CD4-positive, alpha-beta T cell (primary cell): ENCODE measurements at regions of chr4 and their contacts with region 1.

Region 1: GRCh38 chr4:184474263-184475095 is at the start of gene IRF2:
- DNase-seq: peak; percentile 92 to 99 (median 96)
- ATAC-seq: peak; percentile 81
- H3K4me3 ChIP-seq: peak within 1 kb of the TSS; percentile 99
- H3K4me3 Mint-ChIP-seq: peak within 1 kb of the TSS; percentile 98
- H3K27ac ChIP-seq: peak within 1 kb of the TSS; percentile 87 to 95
- H3K27ac Mint-ChIP-seq: peak within 1 kb of the TSS; percentile 98
- H3K4me1 ChIP-seq: peaks cover 51% of the 10 kb centered on the region
- H3K4me1 Mint-ChIP-seq: peaks cover 65% of the 10 kb centered on the region
- H3K27me3 ChIP-seq: no peaks in the 10 kb centered on the region
- H3K27me3 Mint-ChIP-seq: no peaks in the 10 kb centered on the region
- CTCF ChIP-seq: no peak
- total RNA-seq, gene IRF2: 11.4 to 14.9 TPM

Region 2: GRCh38 chr4:184370711-184371389 is 103.6 kb before region 1 on chr4:
- CTCF ChIA-PET with region 1: no interaction called
- POLR2A ChIA-PET with region 1: no interaction called
- intact Hi-C with region 1: no loop called
- DNase-seq: no peak
- ATAC-seq: no peak
- H3K4me3 ChIP-seq: no peak overlapping the region
- H3K4me3 Mint-ChIP-seq: no peak overlapping the region
- H3K27ac ChIP-seq: no peak overlapping the region
- H3K27ac Mint-ChIP-seq: no peak overlapping the region
- H3K4me1 ChIP-seq: no peaks in the 10 kb centered on the region
- H3K4me1 Mint-ChIP-seq: no peaks in the 10 kb centered on the region
- H3K27me3 ChIP-seq: no peaks in the 10 kb centered on the region
- H3K27me3 Mint-ChIP-seq: no peaks in the 10 kb centered on the region
- CTCF ChIP-seq: no peak

Region 3: DNA sequence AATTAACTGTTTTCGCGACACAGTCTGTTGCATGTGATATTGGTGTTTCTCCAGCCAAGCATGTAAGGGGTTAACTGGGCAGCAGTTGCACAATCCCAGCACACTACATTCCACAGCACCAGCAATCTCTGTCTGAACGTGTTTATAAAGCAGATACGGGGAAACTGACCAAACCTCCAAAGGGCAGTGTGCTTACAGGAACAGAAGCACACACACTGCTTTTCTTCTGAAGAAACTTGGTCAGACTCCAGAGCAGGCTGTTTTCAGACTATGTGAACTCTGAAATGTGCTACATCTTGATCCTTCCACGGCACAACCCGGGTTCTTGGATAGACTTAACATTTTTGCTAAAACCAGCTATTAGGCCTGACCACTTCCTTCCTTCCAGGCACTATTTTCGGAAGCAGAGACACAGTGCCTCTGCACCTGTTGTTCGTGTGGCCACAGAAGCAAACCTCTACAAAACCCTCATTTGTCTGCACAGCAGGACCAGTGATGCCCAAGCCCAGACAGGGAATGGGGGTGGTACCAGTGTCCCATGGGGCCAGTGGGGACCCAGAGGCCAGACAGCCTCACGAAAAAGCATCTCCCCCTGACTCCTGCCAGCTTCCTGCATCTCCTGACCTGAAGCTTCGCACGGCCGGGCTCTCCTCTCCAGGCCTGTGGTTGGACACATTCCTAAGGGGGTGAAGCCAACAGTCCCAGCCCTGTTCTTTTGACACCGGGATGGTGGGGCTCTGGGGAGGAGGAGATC is 90.2 kb before region 1 on chr4:
- CTCF ChIA-PET with region 1: no interaction called
- POLR2A ChIA-PET with region 1: interaction called, 13 read pairs
- intact Hi-C with region 1: no loop called
- DNase-seq: peak in 3 of 14 experiments; percentile 8 to 39 (median 10)
- ATAC-seq: peak; percentile 11
- H3K4me3 ChIP-seq: no peak overlapping the region
- H3K4me3 Mint-ChIP-seq: peak overlapping the region; percentile 40
- H3K27ac ChIP-seq: peak overlapping the region in 1 of 2 donors; percentile 15
- H3K27ac Mint-ChIP-seq: peak overlapping the region; percentile 60
- H3K4me1 ChIP-seq: peaks cover 44% of the 10 kb centered on the region
- H3K4me1 Mint-ChIP-seq: peaks cover 68% of the 10 kb centered on the region
- H3K27me3 ChIP-seq: no peaks in the 10 kb centered on the region
- H3K27me3 Mint-ChIP-seq: no peaks in the 10 kb centered on the region
- CTCF ChIP-seq: no peak

Region 4: GRCh38 chr4:184437565-184438265 is 36.8 kb before region 1 on chr4:
- CTCF ChIA-PET with region 1: no interaction called
- POLR2A ChIA-PET with region 1: no interaction called
- intact Hi-C with region 1: loop called in 1 of 2 experiments (anchors 5 kb)
- DNase-seq: no peak
- ATAC-seq: peak; percentile 60
- H3K4me3 ChIP-seq: no peak overlapping the region
- H3K4me3 Mint-ChIP-seq: no peak overlapping the region
- H3K27ac ChIP-seq: no peak overlapping the region
- H3K27ac Mint-ChIP-seq: peak overlapping the region; percentile 23
- H3K4me1 ChIP-seq: peaks cover 57% of the 10 kb centered on the region
- H3K4me1 Mint-ChIP-seq: peaks cover 92% of the 10 kb centered on the region
- H3K27me3 ChIP-seq: no peaks in the 10 kb centered on the region
- H3K27me3 Mint-ChIP-seq: no peaks in the 10 kb centered on the region
- CTCF ChIP-seq: no peak

Region 5: DNA sequence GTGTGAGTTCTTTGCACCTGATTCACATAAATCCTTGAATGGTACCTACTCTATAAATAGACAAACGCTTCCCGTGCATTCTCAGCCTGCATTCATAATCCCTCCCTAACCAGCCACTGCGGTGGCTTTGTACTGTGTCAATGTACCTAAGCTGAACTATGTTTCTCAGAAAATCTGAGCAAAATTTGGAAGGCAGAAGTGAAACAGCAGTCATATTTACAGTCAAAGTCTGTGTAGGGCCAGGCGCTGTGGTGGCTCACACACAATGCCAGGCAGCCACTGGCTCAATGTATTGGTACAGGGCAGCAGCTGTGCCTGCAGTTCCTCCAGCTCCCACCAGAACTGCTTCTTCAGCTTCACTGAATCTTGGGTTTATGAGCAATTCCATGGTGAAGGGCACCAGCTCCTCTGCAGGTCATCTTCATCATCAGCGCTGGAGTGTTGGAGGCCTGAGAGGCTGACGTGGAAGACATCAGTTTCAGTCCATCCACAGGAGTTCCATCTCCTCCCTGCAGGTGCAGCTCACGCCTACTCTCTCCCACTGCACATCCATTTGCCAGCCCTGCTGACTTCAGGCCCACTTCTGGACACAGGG is 32.1 kb after region 1 on chr4:
- CTCF ChIA-PET with region 1: interaction called, 3 read pairs
- POLR2A ChIA-PET with region 1: interaction called, 15 read pairs
- intact Hi-C with region 1: no loop called
- DNase-seq: peak in 4 of 14 experiments; percentile 4 to 58 (median 28)
- ATAC-seq: peak; percentile 80
- H3K4me3 ChIP-seq: no peak overlapping the region
- H3K4me3 Mint-ChIP-seq: peak overlapping the region; percentile 1
- H3K27ac ChIP-seq: no peak overlapping the region
- H3K27ac Mint-ChIP-seq: no peak overlapping the region
- H3K4me1 ChIP-seq: peaks cover 21% of the 10 kb centered on the region
- H3K4me1 Mint-ChIP-seq: peaks cover 36% of the 10 kb centered on the region
- H3K27me3 ChIP-seq: no peaks in the 10 kb centered on the region
- H3K27me3 Mint-ChIP-seq: no peaks in the 10 kb centered on the region
- CTCF ChIP-seq: peak; percentile 33

Region 6: GRCh38 chr4:184649026-184649970 is 174.8 kb after region 1 on chr4 and contains the starts of genes CASP3 and PRIMPOL:
- CTCF ChIA-PET with region 1: no interaction called
- POLR2A ChIA-PET with region 1: interaction called, 38 read pairs
- intact Hi-C with region 1: loop called (anchors 2 kb)
- DNase-seq: peak; percentile 90 to 99 (median 96)
- ATAC-seq: peak; percentile 85
- H3K4me3 ChIP-seq: peak within 1 kb of the TSS; percentile 93
- H3K4me3 Mint-ChIP-seq: peak within 1 kb of the TSS; percentile 96
- H3K27ac ChIP-seq: peak within 1 kb of the TSS; percentile 72 to 77
- H3K27ac Mint-ChIP-seq: peak within 1 kb of the TSS; percentile 96
- H3K4me1 ChIP-seq: peaks cover 37% of the 10 kb centered on the region
- H3K4me1 Mint-ChIP-seq: peaks cover 51% of the 10 kb centered on the region
- H3K27me3 ChIP-seq: no peaks in the 10 kb centered on the region
- H3K27me3 Mint-ChIP-seq: no peaks in the 10 kb centered on the region
- CTCF ChIP-seq: peak; percentile 24
- total RNA-seq, gene CASP3: 11.9 to 12.2 TPM
- total RNA-seq, gene PRIMPOL: 4.2 TPM

Region 7: GRCh38 chr4:184968784-184969201 is 494.3 kb after region 1 on chr4:
- CTCF ChIA-PET with region 1: no interaction called
- POLR2A ChIA-PET with region 1: no interaction called
- intact Hi-C with region 1: loop called in 1 of 2 experiments (anchors 10 kb)
- DNase-seq: no peak
- ATAC-seq: no peak
- H3K4me3 ChIP-seq: no peak overlapping the region
- H3K4me3 Mint-ChIP-seq: no peak overlapping the region
- H3K27ac ChIP-seq: no peak overlapping the region
- H3K27ac Mint-ChIP-seq: peak overlapping the region; percentile 85
- H3K4me1 ChIP-seq: no peaks in the 10 kb centered on the region
- H3K4me1 Mint-ChIP-seq: peaks cover 9% of the 10 kb centered on the region
- H3K27me3 ChIP-seq: no peaks in the 10 kb centered on the region
- H3K27me3 Mint-ChIP-seq: peaks cover 24% of the 10 kb centered on the region
- CTCF ChIP-seq: no peak